ENCODE measurements at regions of chr2 and their contacts with region 1.

Region 1: DNA sequence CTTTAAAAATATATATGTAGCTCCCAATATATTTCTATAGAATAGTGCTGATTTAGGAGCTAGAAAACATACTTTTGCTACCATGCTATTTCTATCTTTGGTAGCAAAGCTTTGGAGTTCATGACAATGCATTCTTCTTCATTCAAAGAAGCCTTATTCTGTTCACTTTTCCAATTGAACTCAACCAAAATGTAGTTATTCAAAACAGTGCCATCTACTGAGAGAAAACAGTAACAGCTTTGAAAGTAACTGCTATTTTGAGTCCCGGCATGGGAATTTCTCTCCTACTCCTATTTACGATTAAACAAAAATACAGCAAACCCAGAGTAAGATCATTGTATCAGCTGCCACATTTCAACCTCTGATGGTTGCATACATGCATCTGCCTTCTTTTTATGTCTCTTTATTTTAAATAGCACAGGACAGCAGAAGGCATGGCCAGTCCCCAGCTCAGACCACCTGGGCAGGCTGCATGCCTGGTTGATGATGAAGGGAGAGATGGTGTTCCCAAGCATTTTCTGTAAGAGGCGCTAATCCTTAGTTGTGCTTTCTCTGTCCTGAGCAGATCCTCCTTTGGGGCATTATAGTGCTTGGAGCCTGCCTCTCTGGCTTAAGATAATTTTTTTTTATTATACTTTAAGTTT is 69.7 kb upstream of the SULT1C3 start:
- H3K4me3 Mint-ChIP-seq: no peak overlapping the region
- H3K27ac Mint-ChIP-seq: no peak overlapping the region
- H3K4me1 Mint-ChIP-seq: no peaks in the 10 kb centered on the region
- H3K27me3 Mint-ChIP-seq: no peaks in the 10 kb centered on the region

Region 2: GRCh38 chr2:107936433-107937359 is 233.4 kb before region 1 on chr2:
- intact Hi-C with region 1: loop called (anchors 10 kb)
- H3K4me3 Mint-ChIP-seq: no peak overlapping the region
- H3K27ac Mint-ChIP-seq: no peak overlapping the region
- H3K4me1 Mint-ChIP-seq: no peaks in the 10 kb centered on the region
- H3K27me3 Mint-ChIP-seq: no peaks in the 10 kb centered on the region

Measured in dendritic cell treated with granulocyte-macrophage colony-stimulating factor and Interleukin-4, amounts not matched to agents 40 ng/mL and 50 ng/mL, for 4 days (primary cell).